ENCODE measurements at regions of chr10 and their contacts with region 1.

Region 1: GRCh38 chr10:54096892-54097291 is 704.1 kb downstream of the PCDH15 start:
- DNase-seq: no peak
- ATAC-seq: no peak
- H3K4me3 Mint-ChIP-seq: no peak overlapping the region
- H3K27ac Mint-ChIP-seq: no peak overlapping the region
- H3K4me1 Mint-ChIP-seq: no peaks in the 10 kb centered on the region
- H3K27me3 Mint-ChIP-seq: no peaks in the 10 kb centered on the region

Region 2: GRCh38 chr10:53886325-53887300 is 210.3 kb before region 1 on chr10:
- CTCF ChIA-PET with region 1: no interaction called
- POLR2A ChIA-PET with region 1: no interaction called
- intact Hi-C with region 1: no loop called
- DNase-seq: no peak
- ATAC-seq: no peak
- H3K4me3 Mint-ChIP-seq: no peak overlapping the region
- H3K27ac Mint-ChIP-seq: no peak overlapping the region
- H3K4me1 Mint-ChIP-seq: no peaks in the 10 kb centered on the region
- H3K27me3 Mint-ChIP-seq: no peaks in the 10 kb centered on the region

Region 3: DNA sequence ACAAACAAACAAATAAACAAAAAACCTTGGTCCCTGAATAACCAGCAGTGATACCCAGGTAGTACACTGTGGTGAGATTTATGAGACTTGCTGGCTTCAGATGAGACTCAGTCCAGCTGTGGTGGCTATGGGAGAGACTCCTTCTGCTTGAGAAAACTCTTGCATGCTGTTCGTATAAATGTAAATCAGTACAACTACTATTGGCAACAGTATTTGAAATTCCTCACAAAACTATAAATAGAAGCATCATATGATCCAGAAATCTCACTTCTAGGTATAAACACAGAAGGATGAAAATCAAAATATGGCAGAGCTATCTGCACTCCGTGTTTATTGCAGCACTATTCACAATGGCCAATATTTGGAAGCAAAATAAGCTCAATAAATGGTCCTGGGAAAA is 12.1 kb after region 1 on chr10:
- CTCF ChIA-PET with region 1: no interaction called
- POLR2A ChIA-PET with region 1: no interaction called
- intact Hi-C with region 1: no loop called
- DNase-seq: no peak
- ATAC-seq: no peak
- H3K4me3 Mint-ChIP-seq: no peak overlapping the region
- H3K27ac Mint-ChIP-seq: no peak overlapping the region
- H3K4me1 Mint-ChIP-seq: no peaks in the 10 kb centered on the region
- H3K27me3 Mint-ChIP-seq: no peaks in the 10 kb centered on the region

Region 4: DNA sequence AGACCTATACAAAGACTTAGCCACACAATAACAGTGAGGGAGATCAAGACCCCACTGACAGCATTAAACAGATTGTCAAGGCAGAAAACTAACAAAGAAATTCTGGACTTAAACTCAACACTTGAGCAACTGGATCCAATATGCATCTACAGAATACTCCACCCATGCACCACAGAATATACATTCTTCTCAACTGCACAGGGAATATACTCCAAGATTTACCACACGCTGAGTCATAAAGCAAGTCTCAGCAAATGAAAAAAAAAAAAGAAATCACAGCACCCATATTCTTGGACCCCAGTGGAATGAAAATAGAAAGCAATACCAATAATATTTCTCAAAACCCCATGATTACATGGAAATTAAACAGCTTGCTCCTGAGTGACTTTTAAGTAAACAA is 23.9 kb after region 1 on chr10:
- CTCF ChIA-PET with region 1: no interaction called
- POLR2A ChIA-PET with region 1: interaction called, 10 read pairs
- intact Hi-C with region 1: no loop called
- DNase-seq: no peak
- ATAC-seq: no peak
- H3K4me3 Mint-ChIP-seq: no peak overlapping the region
- H3K27ac Mint-ChIP-seq: no peak overlapping the region
- H3K4me1 Mint-ChIP-seq: no peaks in the 10 kb centered on the region
- H3K27me3 Mint-ChIP-seq: no peaks in the 10 kb centered on the region

Measured in activated CD4-positive, alpha-beta T cell treated with anti-CD3 and anti-CD28 coated beads for 36 hours (primary cell).